Activated CD8-positive, alpha-beta T cell treated with anti-CD3 and anti-CD28 coated beads for 36 hours (primary cell): ENCODE measurements at regions of chr11 and their contacts with region 1.

Region 1: DNA sequence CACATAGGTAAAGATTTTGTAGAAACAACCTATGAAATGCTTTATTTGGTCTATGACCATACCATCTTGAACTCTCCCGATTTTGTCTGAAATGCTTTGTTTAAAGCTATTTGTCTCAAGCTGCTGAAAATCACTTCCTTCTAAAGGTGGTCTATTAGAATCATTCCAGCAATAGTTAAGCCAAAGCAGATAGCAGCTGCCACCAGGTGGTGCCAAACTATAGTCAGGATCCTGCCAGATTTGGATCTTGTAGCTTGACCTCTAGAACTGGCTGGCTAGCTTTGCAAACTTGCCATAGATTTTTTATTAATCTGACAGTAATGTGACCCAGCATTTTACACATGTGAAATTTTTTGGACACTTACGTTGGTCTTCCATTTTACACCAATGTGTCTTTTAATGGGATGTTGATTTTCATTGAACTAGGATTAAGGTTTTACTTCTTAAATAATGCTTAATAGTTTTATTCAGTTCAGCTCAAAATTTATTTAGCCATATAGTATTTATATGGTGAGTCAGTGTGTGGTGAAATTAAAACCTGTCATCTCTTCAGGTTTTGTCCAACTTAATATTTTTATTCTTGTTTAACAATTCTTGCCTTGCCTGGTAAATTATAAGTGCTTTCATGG is 19.7 kb downstream of the CTR9 start:
- DNase-seq: peak; percentile 60
- ATAC-seq: no peak
- H3K4me3 Mint-ChIP-seq: no peak overlapping the region
- H3K27ac Mint-ChIP-seq: no peak overlapping the region
- H3K4me1 Mint-ChIP-seq: peaks cover 2% of the 10 kb centered on the region
- H3K27me3 Mint-ChIP-seq: no peaks in the 10 kb centered on the region
- CTCF ChIP-seq: peak; percentile 52

Region 2: GRCh38 chr11:10758957-10759356 is 11.8 kb before region 1 on chr11:
- CTCF ChIA-PET with region 1: interaction called, 34 read pairs
- POLR2A ChIA-PET with region 1: no interaction called
- intact Hi-C with region 1: no loop called
- DNase-seq: no peak
- ATAC-seq: no peak
- H3K4me3 Mint-ChIP-seq: no peak overlapping the region
- H3K27ac Mint-ChIP-seq: no peak overlapping the region
- H3K4me1 Mint-ChIP-seq: peaks cover 5% of the 10 kb centered on the region
- H3K27me3 Mint-ChIP-seq: no peaks in the 10 kb centered on the region
- CTCF ChIP-seq: no peak

Region 3: GRCh38 chr11:10786451-10786850 is 15.7 kb after region 1 on chr11:
- CTCF ChIA-PET with region 1: interaction called, 45 read pairs
- POLR2A ChIA-PET with region 1: no interaction called
- intact Hi-C with region 1: no loop called
- DNase-seq: no peak
- ATAC-seq: no peak
- H3K4me3 Mint-ChIP-seq: no peak overlapping the region
- H3K27ac Mint-ChIP-seq: no peak overlapping the region
- H3K4me1 Mint-ChIP-seq: no peaks in the 10 kb centered on the region
- H3K27me3 Mint-ChIP-seq: no peaks in the 10 kb centered on the region
- CTCF ChIP-seq: no peak

Region 4: GRCh38 chr11:10824888-10825287 is 54.1 kb after region 1 on chr11:
- CTCF ChIA-PET with region 1: no interaction called
- POLR2A ChIA-PET with region 1: no interaction called
- intact Hi-C with region 1: no loop called
- DNase-seq: no peak
- ATAC-seq: no peak
- H3K4me3 Mint-ChIP-seq: no peak overlapping the region
- H3K27ac Mint-ChIP-seq: no peak overlapping the region
- H3K4me1 Mint-ChIP-seq: peaks cover 5% of the 10 kb centered on the region
- H3K27me3 Mint-ChIP-seq: no peaks in the 10 kb centered on the region
- CTCF ChIP-seq: no peak